ENCODE measurements at regions of chr1 and their contacts with region 1.

Region 1: GRCh38 chr1:114757455-114758250 is at the start of gene CSDE1:
- DNase-seq: peak; percentile 90 to 98
- H3K4me3 ChIP-seq: peak within 1 kb of the TSS; percentile 81 to 89
- H3K27ac ChIP-seq: peak within 1 kb of the TSS; percentile 99
- H3K4me1 ChIP-seq: peaks cover 0 to 29% of the 10 kb centered on the region in 2 donors
- H3K27me3 ChIP-seq: no peaks in the 10 kb centered on the region
- CTCF ChIP-seq: peak in 2 of 3 experiments; percentile 20 to 27
- total RNA-seq, gene CSDE1: 290 TPM

Region 2: DNA sequence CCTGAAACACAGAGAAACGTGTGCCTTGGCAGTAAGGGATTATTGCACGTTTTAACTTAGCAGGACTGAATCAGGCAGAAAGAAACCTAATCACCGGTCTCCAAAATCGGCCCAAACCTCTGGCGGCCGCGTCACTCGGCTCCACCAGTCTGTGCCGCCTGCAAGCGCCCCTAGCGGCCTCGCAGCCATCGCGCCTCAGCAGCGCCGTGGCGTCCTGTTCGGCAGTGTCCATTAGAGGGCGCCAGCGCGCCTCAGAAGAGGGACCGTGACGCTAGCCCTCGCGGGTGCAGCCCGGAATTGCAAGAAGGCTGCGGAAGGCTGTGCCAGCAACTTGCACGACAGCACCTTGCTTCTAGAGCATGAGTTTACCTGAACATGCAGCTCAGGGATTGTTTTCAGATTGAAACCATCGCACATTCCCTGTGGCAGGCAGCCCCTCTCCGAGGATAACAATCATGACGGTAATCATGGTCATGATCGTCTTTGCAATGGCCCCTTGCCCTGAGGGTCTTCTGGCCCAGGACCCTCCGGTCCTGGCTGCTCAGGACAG is 411.1 kb before region 1 on chr1:
- intact Hi-C with region 1: loop called (anchors 5 kb)
- DNase-seq: peak; percentile 74 to 98
- H3K4me3 ChIP-seq: peak overlapping the region; percentile 69 to 78
- H3K27ac ChIP-seq: peak overlapping the region; percentile 88 to 94
- H3K4me1 ChIP-seq: peaks cover 6 to 8% of the 10 kb centered on the region in 2 donors
- H3K27me3 ChIP-seq: no peaks in the 10 kb centered on the region
- CTCF ChIP-seq: peak; percentile 100

Region 3: DNA sequence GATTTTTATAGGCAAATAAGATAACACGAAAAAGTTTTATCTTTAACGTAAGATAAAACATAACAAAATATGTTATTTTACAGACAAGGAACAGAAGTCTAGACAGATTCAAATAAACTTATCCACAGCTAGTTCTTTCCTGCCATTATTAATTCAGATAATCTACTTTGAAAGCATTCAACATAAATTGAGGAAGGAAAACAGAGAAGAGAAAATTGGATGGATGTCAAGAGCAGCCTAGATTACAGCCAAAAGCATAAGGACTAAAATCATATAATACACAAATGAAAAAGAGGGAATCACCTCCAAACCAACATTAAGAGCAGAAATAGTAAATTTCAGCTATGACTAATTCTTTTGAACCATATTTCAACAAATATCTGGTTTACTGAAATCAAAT is 262.2 kb before region 1 on chr1:
- intact Hi-C with region 1: no loop called
- DNase-seq: no peak
- H3K4me3 ChIP-seq: no peak overlapping the region
- H3K27ac ChIP-seq: no peak overlapping the region
- H3K4me1 ChIP-seq: peaks cover 0 to 17% of the 10 kb centered on the region in 2 donors
- H3K27me3 ChIP-seq: no peaks in the 10 kb centered on the region
- CTCF ChIP-seq: no peak

Region 4: GRCh38 chr1:114716304-114717170 is 41.1 kb before region 1 on chr1 and contains the start of gene NRAS:
- intact Hi-C with region 1: loop called (anchors 2 kb)
- DNase-seq: peak; percentile 71 to 97
- H3K4me3 ChIP-seq: peak within 1 kb of the TSS; percentile 86 to 99
- H3K27ac ChIP-seq: peak within 1 kb of the TSS; percentile 87 to 95
- H3K4me1 ChIP-seq: peaks cover 3 to 12% of the 10 kb centered on the region in 2 donors
- H3K27me3 ChIP-seq: no peaks in the 10 kb centered on the region
- CTCF ChIP-seq: no peak
- total RNA-seq, gene NRAS: 10.7 TPM

Region 5: GRCh38 chr1:114780344-114781226 is 22.9 kb after region 1 on chr1 and contains the start of gene SIKE1:
- intact Hi-C with region 1: loop called (anchors 2 kb)
- DNase-seq: peak; percentile 71 to 96
- H3K4me3 ChIP-seq: peak within 1 kb of the TSS; percentile 76 to 92
- H3K27ac ChIP-seq: peak within 1 kb of the TSS; percentile 90
- H3K4me1 ChIP-seq: peaks cover 0 to 8% of the 10 kb centered on the region in 2 donors
- H3K27me3 ChIP-seq: no peaks in the 10 kb centered on the region
- CTCF ChIP-seq: no peak
- total RNA-seq, gene SIKE1: 17.1 TPM

Region 6: GRCh38 chr1:115052454-115053083 is 294.9 kb after region 1 on chr1:
- intact Hi-C with region 1: loop called (anchors 10 kb)
- DNase-seq: no peak
- H3K4me3 ChIP-seq: no peak overlapping the region
- H3K27ac ChIP-seq: no peak overlapping the region
- H3K4me1 ChIP-seq: no peaks in the 10 kb centered on the region
- H3K27me3 ChIP-seq: no peaks in the 10 kb centered on the region
- CTCF ChIP-seq: peak; percentile 57 to 86 (median 82)

Measured in ascending aorta (tissue), 2 donors.